ENCODE measurements at regions of chr6 and their contacts with region 1.

Region 1: GRCh38 chr6:25017932-25018567 is 82.3 kb upstream of the RIPOR2 start:
- DNase-seq: peak; percentile 75 to 85 (median 84)
- H3K4me3 ChIP-seq: no peak overlapping the region
- H3K4me3 Mint-ChIP-seq: no peak overlapping the region
- H3K27ac ChIP-seq: peak overlapping the region in 1 of 2 donors; percentile 78
- H3K27ac Mint-ChIP-seq: peak overlapping the region in 6 of 7 donors; percentile 73 to 92 (median 82)
- H3K4me1 ChIP-seq: peaks cover 51 to 53% of the 10 kb centered on the region in 2 donors
- H3K4me1 Mint-ChIP-seq: peaks cover 59% of the 10 kb centered on the region
- H3K27me3 ChIP-seq: no peaks in the 10 kb centered on the region
- H3K27me3 Mint-ChIP-seq: no peaks in the 10 kb centered on the region
- CTCF ChIP-seq: peak; percentile 88

Region 2: GRCh38 chr6:24855395-24856245 is 162.4 kb before region 1 on chr6:
- intact Hi-C with region 1: loop called (anchors 2 to 5 kb)
- DNase-seq: peak; percentile 61 to 74 (median 69)
- H3K4me3 ChIP-seq: no peak overlapping the region
- H3K4me3 Mint-ChIP-seq: no peak overlapping the region
- H3K27ac ChIP-seq: peak overlapping the region in 1 of 2 donors; percentile 92
- H3K27ac Mint-ChIP-seq: peak overlapping the region in 6 of 7 donors; percentile 80 to 98 (median 94)
- H3K4me1 ChIP-seq: peaks cover 46 to 54% of the 10 kb centered on the region in 2 donors
- H3K4me1 Mint-ChIP-seq: peaks cover 50% of the 10 kb centered on the region
- H3K27me3 ChIP-seq: no peaks in the 10 kb centered on the region
- H3K27me3 Mint-ChIP-seq: peaks cover 0 to 2% (median 0%) of the 10 kb centered on the region in 3 donors
- CTCF ChIP-seq: peak; percentile 88